Left lung (tissue), 14 donors: ENCODE measurements at regions of chr15 and their contacts with region 1.

Region 1: GRCh38 chr15:60326824-60327654 is 70.7 kb downstream of the ANXA2 start:
- DNase-seq: peak in 2 of 4 donors; percentile 53 to 75
- ATAC-seq: peak; percentile 89
- H3K4me3 ChIP-seq: no peak overlapping the region
- H3K27ac ChIP-seq: no peak overlapping the region
- H3K4me1 ChIP-seq: no peaks in the 10 kb centered on the region
- H3K27me3 ChIP-seq: peaks cover 33 to 58% of the 10 kb centered on the region in 2 donors
- CTCF ChIP-seq: peak; percentile 37 to 74

Region 2: DNA sequence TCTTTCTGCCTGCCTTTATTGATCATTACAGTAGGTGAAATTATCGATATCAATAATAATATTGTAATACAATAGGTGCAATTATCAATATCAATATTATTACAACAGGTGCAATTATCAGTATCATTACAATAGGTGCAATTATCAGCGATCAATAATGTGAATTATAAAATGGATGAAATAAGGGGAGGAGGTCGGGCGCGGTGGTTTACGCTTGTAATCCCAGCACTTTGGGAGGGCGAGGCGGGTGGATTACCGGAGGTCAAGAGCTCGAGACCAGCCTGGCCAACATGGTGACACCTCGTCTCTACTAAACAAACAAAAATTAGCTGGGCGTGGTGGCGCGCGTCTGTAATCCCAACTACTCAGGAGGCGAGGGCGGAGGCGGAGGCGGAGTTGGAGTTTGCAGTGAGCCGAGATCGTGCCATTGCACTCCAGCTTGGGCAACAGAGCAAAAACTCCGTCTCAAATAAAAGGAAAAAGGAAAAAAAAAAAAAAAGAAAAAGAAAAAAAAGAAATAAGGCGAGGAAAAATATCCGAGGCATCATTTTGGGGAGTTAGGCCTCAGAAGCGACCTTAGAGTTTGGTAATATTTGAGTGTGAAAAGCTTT is 637.3 kb before region 1 on chr15:
- intact Hi-C with region 1: loop called in 1 of 2 experiments (anchors 10 kb)
- DNase-seq: peak; percentile 28 to 94 (median 82)
- ATAC-seq: peak; percentile 74
- H3K4me3 ChIP-seq: peak overlapping the region; percentile 89 to 95
- H3K27ac ChIP-seq: peak overlapping the region; percentile 99 to 100
- H3K4me1 ChIP-seq: peaks cover 18 to 40% of the 10 kb centered on the region in 2 donors
- H3K27me3 ChIP-seq: no peaks in the 10 kb centered on the region
- CTCF ChIP-seq: no peak

Region 3: GRCh38 chr15:59725172-59725486 is 601.9 kb before region 1 on chr15:
- intact Hi-C with region 1: loop called in 1 of 2 experiments (anchors 10 kb)
- DNase-seq: no peak
- ATAC-seq: no peak
- H3K4me3 ChIP-seq: no peak overlapping the region
- H3K27ac ChIP-seq: no peak overlapping the region
- H3K4me1 ChIP-seq: no peaks in the 10 kb centered on the region
- H3K27me3 ChIP-seq: peaks cover 0 to 32% of the 10 kb centered on the region in 2 donors
- CTCF ChIP-seq: no peak